GM10248 (cell line): ENCODE measurements at regions of chr12 and their contacts with region 1.

Region 1: GRCh38 chr12:56645717-56646446 is at the start of gene ATP5F1B:
- DNase-seq: peak; percentile 97
- CTCF ChIP-seq: no peak

Region 2: GRCh38 chr12:56657416-56658379 is 11.8 kb after region 1 on chr12:
- CTCF ChIA-PET with region 1: interaction called, 10 read pairs
- POLR2A ChIA-PET with region 1: interaction called, 3 read pairs
- DNase-seq: peak; percentile 39
- CTCF ChIP-seq: no peak

Region 3: DNA sequence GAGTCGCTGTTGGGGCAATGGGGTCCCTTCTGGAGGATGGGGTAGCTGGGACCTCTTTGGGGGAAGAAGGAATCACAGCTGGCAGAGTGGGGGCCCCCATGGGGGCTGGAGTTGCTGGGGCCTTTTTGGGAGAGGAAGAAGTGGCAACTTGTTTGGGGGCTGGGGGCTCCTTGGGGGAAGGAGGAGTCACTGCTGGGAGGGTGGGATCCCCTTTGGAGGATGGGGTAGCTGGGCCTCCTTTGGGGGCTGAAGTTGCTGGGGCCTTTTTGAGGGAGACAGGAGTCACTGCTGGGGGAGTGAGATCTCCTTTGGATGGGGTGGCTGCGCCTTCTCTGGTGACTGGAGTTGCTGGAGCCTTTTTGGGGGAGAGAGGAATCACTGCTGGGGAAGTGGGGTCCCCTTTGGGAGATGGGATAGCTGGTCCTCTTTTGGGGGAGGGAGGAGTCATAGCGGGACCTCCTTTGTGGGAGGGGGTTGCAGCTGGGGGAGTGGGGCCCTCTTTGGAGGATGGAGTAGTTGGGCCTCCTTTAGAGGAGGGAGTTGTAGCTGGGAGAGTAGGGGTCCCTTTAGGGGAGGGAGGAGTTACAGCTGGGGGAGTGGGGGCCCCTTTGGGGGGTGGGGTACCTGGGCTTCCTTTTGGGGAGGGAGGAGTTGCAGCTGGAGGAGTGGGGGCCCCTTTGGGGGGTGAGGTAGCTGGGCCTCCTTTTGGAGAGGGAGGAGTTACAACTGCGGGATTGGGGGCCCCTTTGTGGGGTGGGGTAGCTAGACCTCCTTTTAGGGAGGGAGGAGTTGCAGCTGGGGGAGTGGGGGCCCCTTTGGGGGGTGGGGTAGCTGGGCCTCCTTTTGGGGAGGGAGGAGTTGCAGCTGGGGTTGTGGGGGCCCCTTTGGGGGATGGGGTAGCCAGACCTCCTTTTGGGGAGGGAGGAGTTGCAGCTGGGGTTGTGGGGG is 71.3 kb after region 1 on chr12:
- CTCF ChIA-PET with region 1: no interaction called
- POLR2A ChIA-PET with region 1: interaction called, 11 read pairs
- DNase-seq: no peak
- CTCF ChIP-seq: no peak

Region 4: DNA sequence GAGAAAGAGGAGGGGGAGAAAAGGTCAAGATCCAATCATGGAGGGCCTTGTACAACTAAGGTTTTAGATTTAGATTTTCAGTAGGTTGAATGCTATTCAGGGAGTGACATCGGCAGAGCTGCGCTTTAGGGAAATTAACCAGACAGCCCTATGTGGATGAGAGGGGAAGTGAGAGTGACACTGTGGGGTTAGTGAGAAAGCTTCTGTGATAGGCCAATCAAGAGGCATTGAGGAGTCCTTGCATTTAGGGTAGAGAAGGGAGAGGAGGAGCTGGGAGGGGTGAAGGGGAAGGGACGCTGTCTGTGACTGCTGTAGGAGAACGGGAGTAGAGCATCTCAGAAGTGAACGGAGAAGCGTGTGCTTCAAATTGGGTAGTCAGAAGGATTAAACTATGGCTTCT is 120.7 kb after region 1 on chr12:
- CTCF ChIA-PET with region 1: no interaction called
- POLR2A ChIA-PET with region 1: no interaction called
- DNase-seq: peak; percentile 81
- CTCF ChIP-seq: no peak